ENCODE measurements at regions of chr7 and their contacts with region 1.

Region 1: GRCh38 chr7:33040803-33041516 is 21.6 kb downstream of the NT5C3A start:
- DNase-seq: peak; percentile 89
- ATAC-seq: peak; percentile 93
- H3K4me3 ChIP-seq: peak overlapping the region; percentile 77
- H3K27ac ChIP-seq: peak overlapping the region; percentile 71; the same call in 1 of the 2 replicates
- H3K4me1 ChIP-seq: peaks cover 5% of the 10 kb centered on the region; the same call in 1 of the 2 replicates
- H3K27me3 ChIP-seq: no peaks in the 10 kb centered on the region
- CTCF ChIP-seq: no peak
- EP300 ChIP-seq: 0 out of 4 replicates have a peak, but pooled peaks of 1 of the 2 experiments have one; percentile 15
- POLR2A ChIP-seq: peak; percentile 88
- RAD21 ChIP-seq: no peak

Region 2: GRCh38 chr7:32023376-32023775 is 1017.6 kb before region 1 on chr7:
- CTCF ChIA-PET with region 1: no interaction called
- POLR2A ChIA-PET with region 1: no interaction called
- RAD21 ChIA-PET with region 1: no interaction called
- SMC1A ChIA-PET with region 1: no interaction called
- in situ Hi-C with region 1: no loop called
- intact Hi-C with region 1: loop called (anchors 5 kb)
- DNase-seq: no peak
- ATAC-seq: no peak
- H3K4me3 ChIP-seq: no peak overlapping the region
- H3K27ac ChIP-seq: no peak overlapping the region
- H3K4me1 ChIP-seq: no peaks in the 10 kb centered on the region
- H3K27me3 ChIP-seq: no peaks in the 10 kb centered on the region
- CTCF ChIP-seq: no peak
- EP300 ChIP-seq: no peak
- POLR2A ChIP-seq: no peak
- RAD21 ChIP-seq: no peak

Region 3: GRCh38 chr7:32891800-32892520 is 149.0 kb before region 1 on chr7:
- CTCF ChIA-PET with region 1: no interaction called
- POLR2A ChIA-PET with region 1: interaction called, 21 read pairs
- RAD21 ChIA-PET with region 1: interaction called, 4 read pairs
- SMC1A ChIA-PET with region 1: interaction called, 5 read pairs
- in situ Hi-C with region 1: no loop called
- intact Hi-C with region 1: loop called (anchors 5 kb)
- DNase-seq: peak; percentile 84
- ATAC-seq: peak; percentile 82
- H3K4me3 ChIP-seq: peak overlapping the region; percentile 62
- H3K27ac ChIP-seq: peak overlapping the region; percentile 99
- H3K4me1 ChIP-seq: peaks cover 10% of the 10 kb centered on the region; the same call in 1 of the 2 replicates
- H3K27me3 ChIP-seq: no peaks in the 10 kb centered on the region
- CTCF ChIP-seq: no peak
- EP300 ChIP-seq: no peak
- POLR2A ChIP-seq: peak; percentile 47
- RAD21 ChIP-seq: no peak

Region 4: DNA sequence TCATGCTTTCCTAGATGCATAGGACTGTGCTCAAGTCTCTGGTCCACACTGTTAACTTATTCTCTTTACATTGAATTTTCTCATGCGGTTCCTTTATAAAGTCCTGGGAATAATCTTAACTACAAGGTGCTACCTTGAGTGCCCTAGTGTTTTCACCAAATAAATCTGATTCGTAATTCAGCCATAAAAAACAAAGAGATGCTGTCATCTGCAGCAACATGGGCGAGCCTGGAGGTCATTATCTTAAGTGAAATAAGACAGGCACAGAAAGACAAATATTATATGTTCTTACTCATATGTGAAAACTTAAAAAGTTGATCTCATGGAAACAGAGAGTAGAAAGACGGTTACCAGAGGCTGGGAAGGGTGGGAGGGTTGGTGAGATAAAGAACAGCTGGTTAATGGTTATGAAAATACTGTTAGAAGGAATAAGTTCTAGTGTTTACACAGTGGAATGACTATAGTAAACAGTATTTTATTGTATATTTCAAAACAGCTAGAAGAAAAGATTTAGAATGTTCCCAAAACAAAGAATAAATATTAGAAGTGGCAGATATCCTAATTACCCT is 16.7 kb before region 1 on chr7:
- CTCF ChIA-PET with region 1: interaction called, 4 read pairs
- POLR2A ChIA-PET with region 1: interaction called, 6 read pairs
- RAD21 ChIA-PET with region 1: interaction called, 3 read pairs
- SMC1A ChIA-PET with region 1: interaction called, 14 read pairs
- in situ Hi-C with region 1: no loop called
- intact Hi-C with region 1: no loop called
- DNase-seq: no peak
- ATAC-seq: no peak
- H3K4me3 ChIP-seq: no peak overlapping the region
- H3K27ac ChIP-seq: no peak overlapping the region
- H3K4me1 ChIP-seq: no peaks in the 10 kb centered on the region
- H3K27me3 ChIP-seq: no peaks in the 10 kb centered on the region
- CTCF ChIP-seq: no peak
- EP300 ChIP-seq: no peak
- POLR2A ChIP-seq: no peak
- RAD21 ChIP-seq: no peak

Region 5: GRCh38 chr7:33062782-33063443 is 22.0 kb after region 1 on chr7:
- CTCF ChIA-PET with region 1: interaction called, 5 read pairs
- POLR2A ChIA-PET with region 1: interaction called, 30 read pairs
- RAD21 ChIA-PET with region 1: interaction called, 12 read pairs
- SMC1A ChIA-PET with region 1: interaction called, 31 read pairs
- in situ Hi-C with region 1: no loop called
- intact Hi-C with region 1: no loop called
- DNase-seq: peak; percentile 81
- ATAC-seq: peak; percentile 95
- H3K4me3 ChIP-seq: peak overlapping the region; percentile 93
- H3K27ac ChIP-seq: peak overlapping the region; percentile 89
- H3K4me1 ChIP-seq: peaks cover 3% of the 10 kb centered on the region; the same call in 1 of the 2 replicates
- H3K27me3 ChIP-seq: no peaks in the 10 kb centered on the region
- CTCF ChIP-seq: no peak
- EP300 ChIP-seq: no peak
- POLR2A ChIP-seq: peak; percentile 75
- RAD21 ChIP-seq: no peak

Region 6: DNA sequence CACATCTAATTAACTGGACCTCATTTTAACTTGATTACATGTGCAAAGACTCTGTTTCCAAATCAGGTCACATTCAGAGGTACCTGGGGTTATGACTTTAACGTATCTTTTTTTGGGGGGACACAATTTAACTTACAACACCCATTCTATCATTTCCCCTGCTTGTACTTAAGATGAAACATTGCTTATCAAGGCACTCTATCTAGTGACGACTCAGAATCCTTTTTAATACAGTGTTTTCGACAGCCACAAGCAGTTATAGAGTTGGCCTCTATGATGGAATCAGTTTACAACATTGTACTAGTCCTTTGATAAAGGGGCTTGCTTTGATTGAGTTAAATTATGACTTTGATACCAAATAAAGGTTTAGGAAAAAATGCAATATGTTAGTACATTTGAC is 111.1 kb after region 1 on chr7:
- CTCF ChIA-PET with region 1: no interaction called
- POLR2A ChIA-PET with region 1: no interaction called
- RAD21 ChIA-PET with region 1: no interaction called
- SMC1A ChIA-PET with region 1: no interaction called
- in situ Hi-C with region 1: no loop called
- intact Hi-C with region 1: no loop called
- DNase-seq: no peak
- ATAC-seq: no peak
- H3K4me3 ChIP-seq: no peak overlapping the region
- H3K27ac ChIP-seq: no peak overlapping the region
- H3K4me1 ChIP-seq: no peaks in the 10 kb centered on the region
- H3K27me3 ChIP-seq: no peaks in the 10 kb centered on the region
- CTCF ChIP-seq: no peak
- EP300 ChIP-seq: no peak
- POLR2A ChIP-seq: no peak
- RAD21 ChIP-seq: no peak